Activated naive CD4-positive, alpha-beta T cell treated with anti-CD3 and anti-CD28 coated beads for 36 hours (primary cell): ENCODE measurements at regions of chr5 and their contacts with region 1.

Region 1: DNA sequence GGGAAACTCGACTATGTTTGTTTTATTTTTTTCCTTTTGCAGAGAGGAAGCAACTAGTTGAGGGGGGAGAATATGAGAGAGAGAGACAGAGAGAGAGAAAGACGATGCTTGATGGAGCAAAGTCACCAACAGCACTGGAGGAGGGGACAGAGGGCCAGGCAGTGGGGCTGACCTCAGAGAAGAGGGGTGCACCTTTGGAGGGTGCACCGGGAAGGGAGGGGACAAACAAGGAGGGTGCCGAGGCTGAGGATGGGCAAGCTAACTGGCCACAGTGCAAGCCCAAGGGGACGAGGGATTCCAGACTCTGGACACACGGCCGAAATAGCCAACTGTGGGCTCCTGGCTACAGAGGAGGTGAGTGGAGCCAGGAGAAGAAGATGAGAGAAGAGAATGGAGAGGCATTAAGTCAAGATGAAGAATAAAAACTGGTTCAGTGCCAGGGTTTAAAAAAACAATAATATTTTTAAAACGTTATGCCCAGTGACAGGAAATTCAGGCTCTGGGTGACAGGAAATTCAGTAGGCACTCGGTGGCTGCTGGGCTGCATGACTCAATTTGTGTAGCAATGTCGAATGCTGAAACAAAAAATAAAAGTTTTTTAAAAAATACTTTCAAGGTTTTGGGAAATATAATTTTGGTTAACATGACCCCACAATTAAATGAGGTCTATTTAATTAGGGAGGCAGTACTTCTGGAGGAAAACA is 13.3 kb upstream of the GLRX start:
- DNase-seq: peak; percentile 57
- H3K4me3 Mint-ChIP-seq: peak overlapping the region; percentile 77
- H3K27ac Mint-ChIP-seq: peak overlapping the region; percentile 92
- H3K4me1 Mint-ChIP-seq: peaks cover 47% of the 10 kb centered on the region
- H3K27me3 Mint-ChIP-seq: no peaks in the 10 kb centered on the region

Region 2: DNA sequence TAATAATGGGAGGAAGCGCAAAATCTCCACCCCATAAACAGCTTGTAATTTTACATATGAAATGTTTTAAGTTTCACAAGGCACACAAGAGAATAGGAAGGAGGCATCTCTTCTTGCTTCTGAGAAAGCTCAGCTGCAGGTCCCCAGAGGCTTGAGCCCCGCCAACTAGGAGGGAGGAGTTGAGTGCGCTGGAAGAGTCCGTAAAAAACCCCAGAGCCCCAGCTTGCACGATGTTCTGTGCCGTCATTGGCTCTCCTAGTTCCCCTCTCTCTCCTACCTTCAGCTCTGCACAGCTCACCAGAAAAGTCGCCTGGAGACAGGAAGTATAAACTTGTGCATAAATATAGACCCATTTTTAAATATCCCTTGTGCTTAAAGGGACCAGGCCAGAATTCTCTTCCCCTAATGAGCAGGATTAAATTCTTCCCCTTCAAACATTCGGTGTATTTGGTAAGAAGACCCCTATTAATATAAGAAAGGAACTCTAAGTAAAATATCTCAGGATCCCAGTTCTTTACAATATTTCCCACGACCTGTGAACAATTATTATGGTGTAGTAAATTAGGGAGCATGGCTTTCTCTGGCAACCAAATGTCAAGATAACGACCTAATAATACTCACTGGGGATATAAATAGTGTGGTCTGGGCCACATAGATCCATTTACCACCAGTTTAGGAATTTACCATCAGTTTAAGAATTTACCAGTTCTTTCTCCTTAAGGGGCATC is 27.0 kb before region 1 on chr5:
- CTCF ChIA-PET with region 1: interaction called, 6 read pairs
- intact Hi-C with region 1: loop called (anchors 1 kb)
- DNase-seq: peak; percentile 92
- H3K4me3 Mint-ChIP-seq: peak overlapping the region; percentile 57
- H3K27ac Mint-ChIP-seq: peak overlapping the region; percentile 81
- H3K4me1 Mint-ChIP-seq: peaks cover 55% of the 10 kb centered on the region
- H3K27me3 Mint-ChIP-seq: no peaks in the 10 kb centered on the region

Region 3: DNA sequence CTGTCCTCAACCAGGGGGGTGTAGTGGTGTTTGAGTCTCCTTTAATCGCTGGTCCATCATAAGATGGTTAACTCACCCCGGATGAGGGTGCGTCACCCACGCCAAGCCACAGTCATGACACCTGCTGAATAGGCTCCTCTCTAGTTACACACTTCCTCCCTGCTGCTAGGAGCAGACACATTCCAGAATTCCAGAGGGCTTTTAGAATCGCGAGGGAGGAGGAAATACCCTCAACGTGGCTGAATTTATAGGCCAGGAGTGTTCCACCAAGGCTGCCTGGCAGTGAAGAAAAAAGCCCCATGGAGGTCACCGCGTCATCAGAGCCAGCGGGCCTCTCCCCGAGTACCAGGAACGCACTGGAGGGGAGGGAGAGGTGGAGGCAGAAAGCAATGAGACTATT is 18.4 kb before region 1 on chr5:
- CTCF ChIA-PET with region 1: interaction called, 61 read pairs
- intact Hi-C with region 1: loop called (anchors 1 kb)
- DNase-seq: peak; percentile 61
- H3K4me3 Mint-ChIP-seq: peak overlapping the region; percentile 77
- H3K27ac Mint-ChIP-seq: peak overlapping the region; percentile 91
- H3K4me1 Mint-ChIP-seq: peaks cover 69% of the 10 kb centered on the region
- H3K27me3 Mint-ChIP-seq: no peaks in the 10 kb centered on the region